ENCODE measurements at regions of chr10 and their contacts with region 1.

Region 1: DNA sequence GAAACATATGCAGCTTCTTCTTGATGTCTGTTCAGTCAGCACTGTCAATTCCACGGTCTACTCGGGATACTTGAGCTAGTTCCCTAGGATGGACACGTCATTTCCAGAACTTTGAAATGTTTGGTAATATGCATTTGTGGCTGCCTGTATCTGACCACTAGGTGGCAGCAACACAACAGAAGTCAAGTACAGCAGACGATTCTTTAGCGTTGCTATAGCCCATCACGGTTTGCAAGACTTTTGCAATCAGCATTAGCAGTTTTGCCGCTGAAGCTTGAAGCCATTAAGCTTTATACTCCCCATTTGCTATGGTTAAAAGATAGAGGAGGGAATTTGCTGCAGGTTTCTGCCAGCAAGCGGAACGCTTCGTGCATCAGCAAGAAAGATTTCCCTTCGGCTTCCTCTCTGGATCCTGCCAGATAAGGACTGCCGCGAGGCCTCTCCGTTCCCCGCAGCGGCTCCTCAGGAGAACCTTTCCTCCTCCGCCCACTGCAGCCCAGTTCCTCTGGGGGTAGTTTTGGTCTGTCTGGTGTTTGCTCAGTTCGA is 63.5 kb downstream of the ABCC2 start:
- DNase-seq: peak; percentile 69
- CTCF ChIP-seq: peak; percentile 90

Region 2: DNA sequence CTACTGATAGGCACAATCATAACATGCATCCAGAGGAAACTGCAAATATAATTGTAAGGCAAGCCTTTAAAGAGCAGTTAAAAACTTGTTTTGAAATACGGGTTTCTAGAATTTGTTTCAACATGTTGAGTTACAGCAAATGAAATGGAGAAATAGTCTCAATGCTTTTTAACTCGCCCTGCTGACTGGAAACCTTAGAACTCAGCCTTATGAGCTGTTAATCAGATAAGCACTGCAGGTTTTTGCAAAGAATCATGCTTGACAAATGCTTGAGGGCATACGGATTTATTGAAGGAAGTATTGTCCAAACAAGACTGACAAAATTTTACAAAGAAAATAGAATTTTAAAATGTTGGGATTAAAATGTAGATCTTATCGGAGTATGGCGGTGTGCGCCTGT is 191.1 kb before region 1 on chr10:
- CTCF ChIA-PET with region 1: no interaction called
- POLR2A ChIA-PET with region 1: no interaction called
- DNase-seq: no peak
- CTCF ChIP-seq: no peak

Region 3: DNA sequence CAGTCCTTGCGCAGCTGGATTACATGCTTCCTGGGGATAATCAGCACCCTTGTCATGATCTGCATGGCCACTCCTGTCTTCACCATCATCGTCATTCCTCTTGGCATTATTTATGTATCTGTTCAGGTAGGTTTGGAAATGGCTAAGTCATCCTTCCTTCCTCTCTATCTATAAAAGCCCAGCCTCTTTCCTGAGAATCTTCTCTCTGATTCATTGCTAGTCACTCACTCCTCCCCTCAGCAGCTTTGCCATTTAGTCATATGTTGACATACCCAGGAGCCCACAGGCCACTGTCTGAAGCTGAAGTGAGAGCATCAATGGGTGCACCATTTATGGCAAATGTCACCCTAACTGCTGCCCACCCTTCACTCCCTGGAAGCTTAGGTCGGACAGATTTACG is 11.5 kb before region 1 on chr10:
- CTCF ChIA-PET with region 1: interaction called, 11 read pairs
- POLR2A ChIA-PET with region 1: no interaction called
- DNase-seq: no peak
- CTCF ChIP-seq: no peak

Region 4: DNA sequence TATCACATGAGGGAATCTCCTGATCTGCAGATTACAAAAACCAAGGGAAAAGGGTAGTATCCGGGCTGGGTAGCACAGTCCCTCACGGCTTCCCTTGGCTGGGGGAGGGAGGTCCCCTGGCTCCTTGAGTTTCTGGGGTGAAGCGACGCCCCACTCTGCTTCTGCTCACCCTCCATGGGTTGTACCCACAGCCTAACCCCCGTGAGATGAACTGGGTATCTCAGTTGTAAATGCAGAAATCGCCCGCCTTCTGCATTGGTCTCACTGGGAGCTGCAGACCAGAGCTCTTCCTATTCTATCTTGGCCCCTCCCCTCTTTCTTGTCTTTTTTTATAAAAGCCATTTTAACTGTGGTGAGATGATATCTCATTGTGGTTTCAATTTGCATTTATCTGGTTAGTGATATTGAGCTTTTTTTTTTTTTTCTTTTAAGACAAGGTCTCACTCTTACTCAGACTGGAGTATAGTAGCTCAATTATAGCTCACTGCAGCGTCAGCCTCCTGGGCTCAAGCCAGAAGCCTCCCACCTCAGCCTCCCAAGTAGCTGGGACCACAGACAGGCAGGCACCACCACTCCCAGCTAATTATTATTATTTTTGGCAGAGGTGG is 24.3 kb after region 1 on chr10:
- CTCF ChIA-PET with region 1: interaction called, 21 read pairs
- POLR2A ChIA-PET with region 1: no interaction called
- DNase-seq: no peak
- CTCF ChIP-seq: no peak

Region 5: DNA sequence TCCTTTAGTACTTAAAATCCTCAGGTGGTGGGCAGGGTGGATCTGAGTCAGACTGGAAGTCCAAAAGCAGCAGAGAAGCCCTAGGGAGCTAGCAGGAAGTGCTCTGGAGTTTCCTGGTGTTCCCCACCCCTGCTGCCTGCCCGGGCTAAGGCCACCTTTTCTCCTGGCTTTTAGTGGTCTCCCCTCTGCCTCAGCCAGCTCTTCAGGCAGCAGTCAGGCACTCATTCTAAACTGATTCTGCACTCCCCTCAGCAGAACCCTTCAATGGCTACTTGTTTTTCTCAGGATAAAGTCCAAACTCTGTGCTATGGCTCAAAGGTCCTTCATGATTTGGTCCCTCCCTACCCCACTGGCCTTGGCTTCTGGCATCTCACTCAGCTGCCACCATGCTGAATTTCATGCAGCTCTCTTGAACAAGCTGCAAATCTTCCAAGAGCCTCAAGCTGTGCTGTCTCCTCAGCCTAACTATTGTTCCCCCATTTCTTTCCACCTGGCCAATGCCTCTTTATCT is 192.7 kb after region 1 on chr10:
- CTCF ChIA-PET with region 1: interaction called, 231 read pairs
- POLR2A ChIA-PET with region 1: no interaction called
- DNase-seq: no peak
- CTCF ChIP-seq: no peak

Measured in GM10248 (cell line).